ENCODE measurements at regions of chr12 and their contacts with region 1.

Region 1: DNA sequence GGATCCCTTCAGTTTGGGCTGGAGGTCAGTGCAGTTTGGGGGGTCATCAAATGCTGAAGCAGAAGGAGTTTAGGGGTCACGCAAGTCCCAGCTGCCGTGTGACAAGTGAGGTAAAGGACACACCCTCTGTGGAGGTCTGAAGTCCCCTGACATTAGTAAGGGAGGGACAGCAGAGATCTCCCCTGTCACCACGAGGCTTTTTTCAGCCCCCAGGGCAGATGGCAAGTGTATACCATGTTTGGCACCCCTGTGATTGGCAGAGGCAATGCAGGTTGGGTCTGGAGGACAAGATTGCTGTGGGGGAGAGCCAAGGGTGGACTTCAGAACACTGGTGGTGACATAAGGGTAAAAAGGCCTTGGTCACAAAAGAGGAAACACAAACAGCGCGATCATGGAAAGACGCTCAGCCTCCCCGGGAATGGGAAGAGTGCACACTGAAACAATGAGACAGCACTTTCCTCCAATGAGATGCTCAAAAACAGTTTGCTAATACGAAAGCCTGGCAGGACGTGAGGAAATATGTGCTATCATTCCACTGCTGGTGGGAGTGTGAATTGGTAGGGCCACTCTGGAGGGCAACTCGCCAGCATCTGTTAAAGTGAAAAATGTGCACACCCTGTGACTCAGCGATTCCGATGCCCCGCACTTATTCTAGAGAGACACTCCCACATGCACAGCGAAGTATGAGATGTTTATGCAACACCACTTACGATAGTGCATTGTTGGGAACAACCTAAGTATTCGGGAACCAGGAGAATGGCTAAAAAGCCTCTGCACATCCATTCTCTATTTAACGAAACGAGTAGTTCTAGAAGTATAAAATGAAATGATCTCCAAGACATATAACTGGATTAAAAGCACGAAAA is 14.4 kb upstream of the CD27 start:
- DNase-seq: peak; percentile 84
- ATAC-seq: no peak
- H3K4me3 Mint-ChIP-seq: peak overlapping the region; percentile 1
- H3K27ac Mint-ChIP-seq: peak overlapping the region; percentile 80
- H3K4me1 Mint-ChIP-seq: peaks cover 80% of the 10 kb centered on the region
- H3K27me3 Mint-ChIP-seq: no peaks in the 10 kb centered on the region

Region 2: DNA sequence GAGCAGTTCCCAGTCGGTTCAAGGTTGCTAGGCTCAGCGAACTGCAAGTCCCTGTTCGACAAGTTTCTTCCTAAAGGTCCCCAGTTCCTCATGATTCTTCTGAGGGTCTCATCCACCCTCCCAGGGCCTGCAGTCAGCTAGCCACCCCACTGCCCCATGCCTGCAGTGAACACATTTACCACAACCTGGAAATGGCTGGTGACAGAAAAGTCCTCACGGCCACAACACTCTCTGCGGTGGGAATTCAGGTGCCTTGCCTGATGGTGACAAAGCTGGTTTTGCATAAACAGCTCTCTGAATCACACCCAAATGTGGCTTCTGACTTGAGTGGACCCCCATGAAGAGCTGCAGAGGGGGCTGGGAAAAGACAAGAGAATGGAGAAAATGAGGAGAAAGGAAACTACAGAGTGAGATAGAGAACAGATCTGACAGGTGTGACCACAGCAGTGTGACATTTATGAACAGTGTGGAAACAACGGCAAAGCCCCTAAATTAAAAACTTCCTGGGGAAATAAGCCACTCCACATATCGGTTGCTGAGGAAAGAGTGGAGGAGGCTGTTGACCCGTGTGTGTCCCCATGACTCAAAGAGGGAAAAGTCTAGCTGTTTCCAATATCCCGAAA is 13.1 kb after region 1 on chr12:
- CTCF ChIA-PET with region 1: interaction called, 12 read pairs
- POLR2A ChIA-PET with region 1: interaction called, 10 read pairs
- intact Hi-C with region 1: loop called (anchors 1 kb)
- DNase-seq: peak; percentile 76
- ATAC-seq: peak; percentile 65
- H3K4me3 Mint-ChIP-seq: peak overlapping the region; percentile 86
- H3K27ac Mint-ChIP-seq: peak overlapping the region; percentile 94
- H3K4me1 Mint-ChIP-seq: peaks cover 71% of the 10 kb centered on the region
- H3K27me3 Mint-ChIP-seq: no peaks in the 10 kb centered on the region

Region 3: DNA sequence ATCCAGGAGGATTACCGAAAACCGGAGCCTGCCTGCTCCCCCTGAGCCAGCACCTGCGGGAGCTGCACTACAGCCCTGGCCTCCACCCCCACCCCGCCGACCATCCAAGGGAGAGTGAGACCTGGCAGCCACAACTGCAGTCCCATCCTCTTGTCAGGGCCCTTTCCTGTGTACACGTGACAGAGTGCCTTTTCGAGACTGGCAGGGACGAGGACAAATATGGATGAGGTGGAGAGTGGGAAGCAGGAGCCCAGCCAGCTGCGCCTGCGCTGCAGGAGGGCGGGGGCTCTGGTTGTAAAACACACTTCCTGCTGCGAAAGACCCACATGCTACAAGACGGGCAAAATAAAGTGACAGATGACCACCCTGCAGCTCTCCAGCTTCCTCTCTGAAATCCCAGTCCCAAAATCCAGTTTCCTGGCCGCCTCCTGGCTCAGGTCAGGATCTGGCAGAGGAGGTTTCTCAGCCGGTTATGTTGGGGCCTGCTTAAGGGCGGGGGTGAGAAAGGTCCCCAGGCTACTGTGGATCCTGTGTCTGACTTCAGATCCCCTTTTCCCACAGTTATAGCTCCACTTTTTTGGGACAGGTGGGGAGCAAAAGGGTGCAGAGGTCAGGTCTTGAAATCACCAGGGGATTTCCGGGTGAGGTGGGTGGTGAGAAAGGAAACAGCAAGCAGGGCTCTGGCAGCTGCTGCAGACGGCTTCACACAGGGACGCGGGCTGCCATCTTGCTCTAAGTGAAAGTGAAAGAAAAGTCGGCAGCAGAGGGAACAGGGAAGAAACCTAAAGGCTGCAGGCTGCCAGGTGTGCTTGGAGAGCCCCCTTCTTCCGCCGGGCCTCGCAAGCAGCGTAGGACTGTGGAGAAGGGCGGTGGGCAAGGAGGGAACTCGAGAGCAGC is 21.2 kb after region 1 on chr12 and contains the start of gene TAPBPL:
- CTCF ChIA-PET with region 1: interaction called, 30 read pairs
- POLR2A ChIA-PET with region 1: interaction called, 8 read pairs
- intact Hi-C with region 1: loop called (anchors 1 to 2 kb)
- DNase-seq: peak; percentile 91
- ATAC-seq: peak; percentile 84
- H3K4me3 Mint-ChIP-seq: peak within 1 kb of the TSS; percentile 100
- H3K27ac Mint-ChIP-seq: peak within 1 kb of the TSS; percentile 99
- H3K4me1 Mint-ChIP-seq: peaks cover 67% of the 10 kb centered on the region
- H3K27me3 Mint-ChIP-seq: no peaks in the 10 kb centered on the region
- total RNA-seq, gene TAPBPL: 27.4 to 40.8 TPM

Region 4: GRCh38 chr12:6461401-6462233 is 31.3 kb after region 1 on chr12:
- CTCF ChIA-PET with region 1: interaction called, 200 read pairs
- POLR2A ChIA-PET with region 1: interaction called, 13 read pairs
- intact Hi-C with region 1: loop called (anchors 1 kb)
- DNase-seq: peak; percentile 92
- ATAC-seq: peak; percentile 81
- H3K4me3 Mint-ChIP-seq: peak overlapping the region; percentile 75
- H3K27ac Mint-ChIP-seq: peak overlapping the region; percentile 100
- H3K4me1 Mint-ChIP-seq: peaks cover 86% of the 10 kb centered on the region
- H3K27me3 Mint-ChIP-seq: no peaks in the 10 kb centered on the region

Region 5: DNA sequence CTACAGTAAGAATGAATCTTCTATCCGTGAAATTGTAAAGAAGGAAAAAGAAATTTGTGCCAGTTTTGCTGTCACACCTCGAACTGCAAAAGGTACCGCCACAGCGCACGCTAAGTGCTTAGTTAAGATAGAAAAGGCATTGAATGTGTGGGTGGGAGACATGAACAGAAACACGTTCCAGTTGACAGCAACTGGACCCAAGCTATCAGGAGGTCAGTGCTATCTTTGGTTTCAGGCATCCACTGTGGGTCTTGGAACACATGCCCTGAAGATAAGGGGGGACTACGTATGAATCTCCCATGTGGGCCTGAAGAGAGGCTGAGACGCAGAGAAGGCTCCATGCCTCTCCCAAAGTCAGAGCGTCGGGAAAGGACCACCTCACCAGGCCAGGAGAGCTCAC is 115.7 kb after region 1 on chr12:
- CTCF ChIA-PET with region 1: no interaction called
- POLR2A ChIA-PET with region 1: no interaction called
- intact Hi-C with region 1: no loop called
- DNase-seq: no peak
- ATAC-seq: no peak
- H3K4me3 Mint-ChIP-seq: no peak overlapping the region
- H3K27ac Mint-ChIP-seq: no peak overlapping the region
- H3K4me1 Mint-ChIP-seq: peaks cover 24% of the 10 kb centered on the region
- H3K27me3 Mint-ChIP-seq: no peaks in the 10 kb centered on the region